ENCODE measurements at regions of chr10 and their contacts with region 1.

Region 1: DNA sequence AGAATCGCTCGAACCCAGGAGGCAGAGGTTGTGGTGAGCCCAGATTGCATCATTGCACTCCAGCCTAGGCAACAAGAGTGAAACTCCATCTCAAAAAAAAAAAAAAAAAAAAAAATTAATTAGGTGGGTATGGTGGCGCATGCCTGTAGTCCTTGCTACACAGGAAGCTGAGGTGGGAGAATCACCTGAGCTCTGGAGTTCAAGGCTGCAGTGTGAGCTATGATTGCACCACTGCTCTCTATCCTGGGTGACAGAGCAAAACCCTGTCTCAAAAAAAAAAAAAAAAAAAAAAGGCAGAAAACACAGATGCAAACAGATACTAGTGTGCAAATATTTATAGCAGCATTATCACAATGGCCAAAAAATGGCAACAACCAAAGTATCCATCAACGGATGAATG is 134.4 kb downstream of the RGS10 start:
- DNase-seq: no peak
- H3K27ac ChIP-seq: no peak overlapping the region
- CTCF ChIP-seq: no peak

Region 2: DNA sequence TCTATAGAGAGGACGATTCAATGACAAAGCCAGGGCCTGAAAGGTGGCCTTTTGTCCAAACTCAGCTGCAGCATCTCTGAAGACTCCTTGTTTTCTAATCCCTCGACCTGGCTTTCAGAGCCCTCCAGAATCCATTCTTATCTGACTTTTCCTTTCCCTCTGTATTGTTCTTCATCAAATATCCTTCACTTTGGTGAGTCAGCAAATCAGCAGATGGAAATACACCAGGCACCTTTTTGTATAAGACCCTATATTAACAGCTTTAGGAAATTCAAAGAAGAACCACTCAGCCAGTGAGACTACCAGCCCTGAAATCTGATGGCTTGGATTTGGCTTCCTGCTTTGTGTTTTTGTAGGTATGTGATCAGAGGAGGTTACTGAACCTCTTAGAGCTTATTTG is 1279.4 kb before region 1 on chr10:
- CTCF ChIA-PET with region 1: no interaction called
- POLR2A ChIA-PET with region 1: no interaction called
- DNase-seq: no peak
- H3K27ac ChIP-seq: no peak overlapping the region
- CTCF ChIP-seq: no peak

Region 3: DNA sequence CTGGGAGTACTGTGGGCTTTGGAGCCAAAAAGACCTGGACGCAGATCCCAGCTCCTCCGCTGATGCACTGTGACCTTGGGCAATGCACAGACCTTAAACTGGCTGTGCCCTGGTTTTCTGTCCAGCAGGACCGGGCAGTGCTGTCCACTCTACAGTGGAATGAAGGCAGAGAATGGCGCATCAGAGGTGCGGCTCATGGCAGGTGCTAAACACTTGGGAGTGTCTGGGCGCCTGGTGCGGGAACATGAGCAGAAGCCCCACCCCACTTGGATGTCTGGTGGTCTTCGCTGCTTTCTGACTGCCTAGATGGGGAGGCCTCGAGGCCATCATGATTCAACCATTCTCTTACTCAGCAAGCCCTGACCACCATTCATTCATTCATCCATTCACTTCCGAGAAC is 47.0 kb before region 1 on chr10:
- CTCF ChIA-PET with region 1: no interaction called
- POLR2A ChIA-PET with region 1: no interaction called
- DNase-seq: no peak
- H3K27ac ChIP-seq: no peak overlapping the region
- CTCF ChIP-seq: no peak

Region 4: DNA sequence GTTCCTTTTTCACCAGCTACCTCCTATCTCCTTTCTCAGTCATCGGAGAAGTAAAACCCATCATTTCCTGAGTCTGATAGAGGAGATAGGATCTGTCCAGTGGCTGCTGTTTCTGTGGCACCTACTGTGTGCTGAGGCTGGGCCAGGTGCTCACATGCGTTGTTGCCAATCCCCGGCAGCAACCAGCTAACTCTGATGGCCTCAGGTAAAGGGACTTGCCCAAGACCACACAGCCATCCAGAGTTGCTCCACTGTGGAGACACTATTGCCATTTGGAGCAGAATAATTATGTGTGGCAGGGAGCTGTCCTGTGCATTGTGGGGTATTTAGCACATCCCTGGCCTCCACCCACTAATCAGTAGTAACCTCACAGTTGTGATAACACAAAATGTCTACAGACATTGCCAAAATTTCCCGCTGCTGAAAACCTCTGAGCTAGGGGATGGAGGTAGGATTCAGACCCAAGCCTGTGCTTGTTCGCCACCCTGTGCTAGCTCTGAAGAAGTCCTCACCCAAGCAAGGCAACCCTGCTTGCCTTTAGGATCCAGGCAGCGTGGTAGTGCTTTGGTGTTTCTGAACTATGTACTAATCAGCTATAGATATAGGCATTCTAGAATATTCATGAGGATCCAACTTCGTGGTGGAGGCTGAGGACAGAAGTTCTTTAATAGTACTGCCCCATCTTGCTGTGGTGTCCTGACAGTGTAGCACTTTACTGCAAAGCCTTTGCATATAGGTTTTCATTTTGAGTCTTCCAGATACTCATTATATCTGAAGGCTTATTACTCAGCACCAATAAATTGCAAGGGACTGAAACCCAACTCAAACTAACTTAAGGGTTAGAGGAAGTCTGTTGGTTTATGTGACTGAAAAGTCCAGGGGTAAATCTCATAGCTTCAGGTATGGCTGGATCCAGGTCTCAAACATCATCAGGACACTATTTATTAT is 36.1 kb before region 1 on chr10:
- CTCF ChIA-PET with region 1: no interaction called
- POLR2A ChIA-PET with region 1: interaction called, 10 read pairs
- DNase-seq: no peak
- H3K27ac ChIP-seq: no peak overlapping the region
- CTCF ChIP-seq: no peak

Region 5: DNA sequence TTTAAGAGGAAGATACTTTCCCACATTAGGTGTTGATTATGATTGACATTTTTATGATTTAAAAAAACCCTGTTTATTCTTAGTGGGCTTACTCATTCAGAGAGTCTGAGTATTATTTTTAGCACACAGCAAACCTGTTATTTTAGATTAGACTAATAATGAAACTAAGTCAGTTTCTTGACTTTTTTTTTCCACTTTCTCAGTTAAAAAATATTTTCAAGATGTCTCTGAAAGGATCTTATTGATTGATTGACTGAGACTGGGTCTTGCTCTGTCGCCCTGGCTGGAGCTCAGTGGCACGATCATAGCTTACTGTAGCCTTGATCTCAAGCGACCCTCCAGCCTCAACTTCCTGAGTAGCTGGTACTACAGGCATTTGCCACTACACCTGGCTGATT is 297.4 kb after region 1 on chr10:
- CTCF ChIA-PET with region 1: no interaction called
- POLR2A ChIA-PET with region 1: no interaction called
- DNase-seq: no peak
- H3K27ac ChIP-seq: no peak overlapping the region
- CTCF ChIP-seq: no peak

Measured in RWPE1 (cell line).